ENCODE measurements at regions of chr4 and their contacts with region 1.

Region 1: DNA sequence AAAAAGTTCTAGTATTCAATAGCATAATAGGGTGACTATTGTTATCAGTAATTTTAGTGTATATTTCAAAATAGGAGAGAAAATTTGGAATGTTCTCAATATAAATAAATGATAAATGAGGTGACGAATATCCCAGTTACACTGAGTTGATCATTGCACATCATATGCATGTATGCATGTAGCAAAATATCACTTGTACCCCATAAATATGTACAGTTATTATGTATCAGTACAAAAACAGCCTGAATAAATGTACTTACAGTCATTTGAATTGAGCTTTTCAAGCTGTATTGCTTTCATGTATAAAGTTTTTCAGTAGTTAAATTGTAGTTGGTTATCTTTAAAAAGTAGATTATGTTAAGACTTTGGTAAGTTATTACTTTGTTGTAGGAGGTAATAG is 12.6 kb downstream of the CISD2 start:
- DNase-seq: no peak
- ATAC-seq: no peak
- H3K4me3 Mint-ChIP-seq: no peak overlapping the region
- H3K27ac Mint-ChIP-seq: no peak overlapping the region
- H3K4me1 Mint-ChIP-seq: peaks cover 9% of the 10 kb centered on the region
- H3K27me3 Mint-ChIP-seq: no peaks in the 10 kb centered on the region

Region 2: DNA sequence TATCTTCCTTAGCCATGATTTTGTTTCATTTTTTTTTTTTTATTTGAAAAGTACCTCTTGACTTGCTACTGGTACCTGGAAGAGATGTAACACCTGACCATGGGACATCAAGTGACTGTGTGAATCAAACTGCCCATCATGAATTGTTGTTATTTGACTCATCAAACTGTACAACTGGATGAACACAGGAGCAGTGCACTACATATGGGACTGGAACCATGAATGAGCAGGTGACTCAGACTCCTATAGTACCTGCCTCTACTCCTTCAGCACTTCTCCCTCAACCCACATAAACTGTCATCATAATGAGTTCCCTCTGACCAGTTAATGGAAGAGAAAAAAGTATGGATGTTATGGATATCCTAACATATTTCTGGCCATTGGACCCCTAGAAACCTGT is 38.1 kb before region 1 on chr4:
- POLR2A ChIA-PET with region 1: no interaction called
- DNase-seq: no peak
- ATAC-seq: no peak
- H3K4me3 Mint-ChIP-seq: no peak overlapping the region
- H3K27ac Mint-ChIP-seq: no peak overlapping the region
- H3K4me1 Mint-ChIP-seq: peaks cover 12% of the 10 kb centered on the region
- H3K27me3 Mint-ChIP-seq: no peaks in the 10 kb centered on the region

Region 3: GRCh38 chr4:102868781-102869568 is 12.4 kb before region 1 on chr4 and contains the start of gene CISD2:
- POLR2A ChIA-PET with region 1: interaction called, 13 read pairs
- DNase-seq: peak; percentile 96
- ATAC-seq: peak; percentile 89
- H3K4me3 Mint-ChIP-seq: peak within 1 kb of the TSS; percentile 95
- H3K27ac Mint-ChIP-seq: peak within 1 kb of the TSS; percentile 99
- H3K4me1 Mint-ChIP-seq: peaks cover 54% of the 10 kb centered on the region
- H3K27me3 Mint-ChIP-seq: no peaks in the 10 kb centered on the region
- total RNA-seq, gene CISD2: 25.2 to 28.5 TPM

Measured in activated naive CD8-positive, alpha-beta T cell treated with anti-CD3 and anti-CD28 coated beads, Interleukin-2, amount 10 ng/mL, durations not matched to agents 7 days and 5 days (primary cell).